ENCODE measurements at regions of chr3 and their contacts with region 1.

Region 1: GRCh38 chr3:65019443-65020055 is 331.7 kb upstream of the ADAMTS9 start:
- DNase-seq: peak in 1 of 2 experiments; percentile 76
- H3K4me3 ChIP-seq: peak overlapping the region; percentile 24; the same call in 1 of the 2 replicates
- H3K27ac ChIP-seq: peak overlapping the region; percentile 69
- H3K4me1 ChIP-seq: peaks cover 23% of the 10 kb centered on the region
- H3K27me3 ChIP-seq: no peaks in the 10 kb centered on the region
- CTCF ChIP-seq: no peak

Region 2: GRCh38 chr3:65030847-65031558 is 11.5 kb after region 1 on chr3:
- CTCF ChIA-PET with region 1: no interaction called
- POLR2A ChIA-PET with region 1: no interaction called
- intact Hi-C with region 1: loop called (anchors 1 kb)
- DNase-seq: peak; percentile 24 to 85
- H3K4me3 ChIP-seq: no peak overlapping the region
- H3K27ac ChIP-seq: no peak overlapping the region
- H3K4me1 ChIP-seq: peaks cover 15% of the 10 kb centered on the region; the same call in 1 of the 2 replicates
- H3K27me3 ChIP-seq: no peaks in the 10 kb centered on the region
- CTCF ChIP-seq: no peak

Measured in PC-9 (cell line).